ENCODE measurements at regions of chr4 and their contacts with region 1.

Region 1: DNA sequence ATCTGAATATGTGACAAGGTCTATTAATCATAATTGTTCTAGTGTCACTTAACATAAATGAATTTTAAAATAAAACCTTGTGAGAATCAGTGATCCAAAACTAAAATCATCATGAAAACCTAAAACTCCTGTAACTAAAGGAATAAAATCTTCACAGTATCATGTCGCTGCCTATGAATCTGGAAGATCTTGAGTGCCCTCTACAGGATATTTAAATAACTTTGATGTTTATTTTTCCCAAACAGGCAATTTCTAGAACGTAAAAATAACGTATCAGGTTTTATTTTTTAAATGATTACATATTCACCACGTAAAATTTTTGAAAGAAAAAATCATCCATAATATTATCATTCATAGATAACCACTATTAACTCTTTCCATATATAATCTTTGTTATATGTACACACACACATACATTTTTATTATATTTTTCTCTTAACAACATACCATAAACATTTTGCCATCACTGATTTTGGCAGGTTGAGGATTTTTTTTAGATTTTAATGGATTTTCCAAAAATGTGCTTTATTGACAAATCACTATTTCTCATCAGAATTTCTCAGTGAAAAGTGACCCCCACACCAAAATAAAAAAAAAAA is 79.6 kb downstream of the COMMD8 start:
- DNase-seq: peak; percentile 64
- ATAC-seq: peak; percentile 59; the same call in 1 of the 2 replicates
- H3K4me3 ChIP-seq: no peak overlapping the region
- H3K27ac ChIP-seq: no peak overlapping the region
- H3K4me1 ChIP-seq: no peaks in the 10 kb centered on the region
- H3K27me3 ChIP-seq: no peaks in the 10 kb centered on the region
- CTCF ChIP-seq: peak; percentile 79
- POLR2A ChIP-seq: no peak
- RAD21 ChIP-seq: peak; percentile 84

Region 2: GRCh38 chr4:46844325-46844917 is 539.5 kb before region 1 on chr4:
- CTCF ChIA-PET with region 1: interaction called, 6 read pairs
- POLR2A ChIA-PET with region 1: no interaction called
- dilution Hi-C with region 1: no loop called
- in situ Hi-C with region 1: no loop called
- intact Hi-C with region 1: loop called (anchors 1 kb)
- DNase-seq: peak; percentile 61
- ATAC-seq: no peak
- H3K4me3 ChIP-seq: no peak overlapping the region
- H3K27ac ChIP-seq: no peak overlapping the region
- H3K4me1 ChIP-seq: no peaks in the 10 kb centered on the region; the same call in 1 of the 2 replicates
- H3K27me3 ChIP-seq: no peaks in the 10 kb centered on the region; the same call in 1 of the 2 replicates
- CTCF ChIP-seq: peak; percentile 75
- POLR2A ChIP-seq: no peak
- RAD21 ChIP-seq: peak; percentile 73

Region 3: DNA sequence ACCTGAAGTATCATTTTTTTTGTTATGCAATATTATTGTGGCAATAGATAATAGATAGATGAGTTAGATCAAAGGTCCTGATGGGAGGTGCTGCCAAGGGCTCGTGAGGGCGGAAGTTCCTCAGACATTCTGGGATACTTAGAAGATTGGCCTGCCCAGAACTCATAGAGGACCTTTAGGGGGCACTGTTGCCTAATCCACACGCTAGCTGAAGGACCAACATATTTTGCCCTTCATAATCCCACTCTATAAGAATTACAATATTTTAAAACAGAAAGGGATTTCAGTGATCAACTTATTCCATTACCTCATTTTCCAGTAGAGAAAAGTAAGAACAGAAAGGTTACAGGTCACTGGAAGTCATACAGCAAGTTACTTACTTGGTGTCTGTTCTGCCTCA is 451.9 kb before region 1 on chr4:
- CTCF ChIA-PET with region 1: no interaction called
- POLR2A ChIA-PET with region 1: no interaction called
- dilution Hi-C with region 1: no loop called
- in situ Hi-C with region 1: loop called (anchors 5 kb)
- intact Hi-C with region 1: loop called (anchors 1 kb)
- DNase-seq: peak; percentile 70
- ATAC-seq: peak; percentile 91
- H3K4me3 ChIP-seq: no peak overlapping the region
- H3K27ac ChIP-seq: no peak overlapping the region
- H3K4me1 ChIP-seq: peaks cover 1% of the 10 kb centered on the region; the same call in 1 of the 2 replicates
- H3K27me3 ChIP-seq: no peaks in the 10 kb centered on the region
- CTCF ChIP-seq: peak; percentile 81
- POLR2A ChIP-seq: no peak
- RAD21 ChIP-seq: peak; percentile 87

Region 4: DNA sequence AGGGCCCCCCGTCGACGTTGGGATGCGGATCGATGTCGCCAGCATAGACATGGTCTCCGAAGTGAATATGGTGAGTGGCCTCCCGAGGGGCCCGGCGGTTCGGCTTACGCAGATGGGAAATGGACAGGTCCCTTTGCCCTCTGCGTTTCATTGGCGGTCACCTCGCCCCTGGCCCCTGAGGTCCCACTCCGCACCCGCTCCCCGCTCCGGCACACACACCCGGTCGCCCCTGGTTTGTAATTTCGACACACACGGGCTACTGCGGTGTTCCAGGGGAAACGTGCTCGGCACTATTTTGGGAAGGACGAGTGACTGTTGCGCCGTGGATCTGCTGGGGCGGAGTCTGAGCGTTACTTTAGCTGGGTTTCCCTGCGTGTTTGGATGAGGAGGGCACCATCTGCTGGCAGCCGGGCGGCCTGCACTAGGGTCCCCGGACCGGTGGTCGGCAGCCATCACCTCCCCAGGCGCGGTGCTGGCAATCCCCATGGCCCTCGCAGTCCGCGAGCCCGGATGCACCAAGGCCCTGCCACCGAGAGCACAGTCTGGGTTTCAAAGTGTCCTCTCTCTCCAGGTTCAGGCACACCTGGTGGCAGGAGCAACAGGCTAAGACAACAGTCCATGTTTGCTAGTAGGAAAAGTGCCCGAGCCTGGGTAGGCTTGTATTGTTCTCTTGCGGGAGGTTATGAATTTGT is 351.4 kb before region 1 on chr4:
- CTCF ChIA-PET with region 1: no interaction called
- POLR2A ChIA-PET with region 1: no interaction called
- dilution Hi-C with region 1: no loop called
- in situ Hi-C with region 1: no loop called
- intact Hi-C with region 1: loop called (anchors 5 kb)
- DNase-seq: peak; percentile 65
- ATAC-seq: peak; percentile 96
- H3K4me3 ChIP-seq: peak overlapping the region; percentile 58
- H3K27ac ChIP-seq: peak overlapping the region; percentile 3; the same call in 1 of the 2 replicates
- H3K4me1 ChIP-seq: no peaks in the 10 kb centered on the region
- H3K27me3 ChIP-seq: no peaks in the 10 kb centered on the region; the same call in 1 of the 2 replicates
- CTCF ChIP-seq: peak; percentile 80
- POLR2A ChIP-seq: no peak
- RAD21 ChIP-seq: peak; percentile 75

Region 5: GRCh38 chr4:47562297-47562696 is 178.4 kb after region 1 on chr4:
- CTCF ChIA-PET with region 1: no interaction called
- POLR2A ChIA-PET with region 1: no interaction called
- dilution Hi-C with region 1: no loop called
- in situ Hi-C with region 1: no loop called
- intact Hi-C with region 1: loop called (anchors 10 kb)
- DNase-seq: no peak
- ATAC-seq: no peak
- H3K4me3 ChIP-seq: no peak overlapping the region
- H3K27ac ChIP-seq: no peak overlapping the region
- H3K4me1 ChIP-seq: peaks cover 2% of the 10 kb centered on the region; the same call in 1 of the 2 replicates
- H3K27me3 ChIP-seq: no peaks in the 10 kb centered on the region
- CTCF ChIP-seq: no peak
- POLR2A ChIP-seq: no peak
- RAD21 ChIP-seq: no peak